Activated T-helper 1 cell treated with anti-CD3 and anti-CD28 coated beads, Interleukin-12 subunit alpha, Interleukin-12 subunit beta, Interleukin-2, Interleukin-4 antibody, amounts not matched to agents 30 ng/mL and 10 ng/mL and 1 ng/mL, durations not matched to agents 14 hours and 24 hours and 36 hours (primary cell): ENCODE measurements at regions of chr12 and their contacts with region 1.

Region 1: GRCh38 chr12:8860165-8860961 is 37.9 kb downstream of the A2ML1 start:
- DNase-seq: no peak
- H3K4me3 Mint-ChIP-seq: no peak overlapping the region
- H3K27ac Mint-ChIP-seq: no peak overlapping the region
- H3K4me1 Mint-ChIP-seq: no peaks in the 10 kb centered on the region
- H3K27me3 Mint-ChIP-seq: peaks cover 5% of the 10 kb centered on the region

Region 2: GRCh38 chr12:8662593-8662992 is 197.8 kb before region 1 on chr12 and contains the start of gene MFAP5:
- intact Hi-C with region 1: loop called (anchors 1 kb)
- DNase-seq: no peak
- H3K4me3 Mint-ChIP-seq: no peak within 1 kb of the TSS
- H3K27ac Mint-ChIP-seq: no peak within 1 kb of the TSS
- H3K4me1 Mint-ChIP-seq: no peaks in the 10 kb centered on the region
- H3K27me3 Mint-ChIP-seq: peaks cover 21% of the 10 kb centered on the region
- total RNA-seq, gene MFAP5: not detected in 2 replicates

Region 3: GRCh38 chr12:8681041-8681902 is 179.1 kb before region 1 on chr12:
- intact Hi-C with region 1: loop called (anchors 1 kb)
- DNase-seq: no peak
- H3K4me3 Mint-ChIP-seq: no peak overlapping the region
- H3K27ac Mint-ChIP-seq: no peak overlapping the region
- H3K4me1 Mint-ChIP-seq: no peaks in the 10 kb centered on the region
- H3K27me3 Mint-ChIP-seq: peaks cover 12% of the 10 kb centered on the region

Region 4: DNA sequence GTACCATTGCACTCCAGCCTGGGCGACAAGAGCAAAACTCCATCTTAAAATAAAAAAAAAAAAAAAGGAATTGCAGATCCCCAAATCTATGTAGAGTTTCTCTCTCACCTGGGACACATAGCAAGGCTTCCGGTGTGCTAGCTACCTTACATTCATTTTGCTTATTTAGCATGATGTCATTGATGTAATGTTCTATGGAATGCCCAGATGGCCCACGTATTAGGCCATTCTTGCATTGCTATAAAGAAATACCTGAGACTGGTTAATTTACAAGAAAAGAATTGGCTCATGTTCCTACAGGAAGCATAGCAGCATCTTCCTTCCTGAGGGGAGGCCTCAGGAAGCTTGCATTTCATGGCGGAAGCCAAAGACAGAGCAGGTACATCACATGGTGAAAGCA is 74.9 kb before region 1 on chr12:
- intact Hi-C with region 1: no loop called
- DNase-seq: no peak
- H3K4me3 Mint-ChIP-seq: no peak overlapping the region
- H3K27ac Mint-ChIP-seq: no peak overlapping the region
- H3K4me1 Mint-ChIP-seq: no peaks in the 10 kb centered on the region
- H3K27me3 Mint-ChIP-seq: no peaks in the 10 kb centered on the region